ENCODE measurements at regions of chr4 and their contacts with region 1.

Region 1: DNA sequence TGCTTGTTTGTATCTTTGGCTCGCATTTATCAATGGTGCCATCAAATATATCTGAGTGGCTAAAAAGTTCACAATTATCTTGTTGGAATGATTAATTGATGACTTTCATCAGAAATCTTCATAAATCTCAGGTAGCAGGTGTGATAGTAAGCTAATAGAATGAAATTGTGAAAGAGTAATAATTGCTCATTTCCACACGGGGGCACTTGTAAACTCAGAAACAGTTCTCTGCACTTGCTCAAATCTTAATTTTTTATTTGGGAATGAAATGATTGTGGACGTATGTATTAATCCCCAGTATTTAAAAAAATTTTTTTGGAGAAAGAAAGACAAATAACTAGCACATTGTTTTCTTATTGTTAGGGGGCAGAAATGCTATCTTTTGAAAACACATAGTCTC is 132.8 kb downstream of the DTHD1 start:
- DNase-seq: no peak
- H3K4me3 ChIP-seq: no peak overlapping the region
- H3K4me3 Mint-ChIP-seq: no peak overlapping the region
- H3K27ac ChIP-seq: no peak overlapping the region
- H3K27ac Mint-ChIP-seq: no peak overlapping the region
- H3K4me1 ChIP-seq: no peaks in the 10 kb centered on the region
- H3K4me1 Mint-ChIP-seq: no peaks in the 10 kb centered on the region
- H3K27me3 ChIP-seq: peaks cover 14% of the 10 kb centered on the region
- H3K27me3 Mint-ChIP-seq: peaks cover 21 to 37% of the 10 kb centered on the region in 2 donors

Region 2: DNA sequence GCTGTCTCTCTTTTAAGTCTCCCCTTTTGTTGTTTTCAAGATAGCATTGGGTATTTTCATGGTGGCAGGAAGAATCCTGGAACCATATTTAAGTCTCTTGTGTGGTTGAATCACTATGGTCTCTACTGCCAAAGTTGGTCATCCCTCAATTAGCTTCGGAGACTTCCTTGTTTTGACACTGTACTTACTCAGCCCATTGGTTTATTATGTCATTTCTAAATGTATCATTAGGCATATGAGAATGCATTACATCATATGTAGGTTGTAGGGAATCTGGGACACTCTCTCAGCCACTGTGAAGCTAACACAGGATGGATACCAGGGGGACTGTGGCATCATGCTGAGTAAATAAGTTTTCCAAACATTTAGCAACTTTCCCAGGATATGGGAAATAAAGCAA is 79.0 kb after region 1 on chr4:
- CTCF ChIA-PET with region 1: no interaction called
- POLR2A ChIA-PET with region 1: no interaction called
- intact Hi-C with region 1: no loop called
- DNase-seq: no peak
- H3K4me3 ChIP-seq: no peak overlapping the region
- H3K4me3 Mint-ChIP-seq: no peak overlapping the region
- H3K27ac ChIP-seq: no peak overlapping the region
- H3K27ac Mint-ChIP-seq: no peak overlapping the region
- H3K4me1 ChIP-seq: no peaks in the 10 kb centered on the region
- H3K4me1 Mint-ChIP-seq: no peaks in the 10 kb centered on the region
- H3K27me3 ChIP-seq: no peaks in the 10 kb centered on the region
- H3K27me3 Mint-ChIP-seq: peaks cover 0 to 1% of the 10 kb centered on the region in 2 donors

Region 3: DNA sequence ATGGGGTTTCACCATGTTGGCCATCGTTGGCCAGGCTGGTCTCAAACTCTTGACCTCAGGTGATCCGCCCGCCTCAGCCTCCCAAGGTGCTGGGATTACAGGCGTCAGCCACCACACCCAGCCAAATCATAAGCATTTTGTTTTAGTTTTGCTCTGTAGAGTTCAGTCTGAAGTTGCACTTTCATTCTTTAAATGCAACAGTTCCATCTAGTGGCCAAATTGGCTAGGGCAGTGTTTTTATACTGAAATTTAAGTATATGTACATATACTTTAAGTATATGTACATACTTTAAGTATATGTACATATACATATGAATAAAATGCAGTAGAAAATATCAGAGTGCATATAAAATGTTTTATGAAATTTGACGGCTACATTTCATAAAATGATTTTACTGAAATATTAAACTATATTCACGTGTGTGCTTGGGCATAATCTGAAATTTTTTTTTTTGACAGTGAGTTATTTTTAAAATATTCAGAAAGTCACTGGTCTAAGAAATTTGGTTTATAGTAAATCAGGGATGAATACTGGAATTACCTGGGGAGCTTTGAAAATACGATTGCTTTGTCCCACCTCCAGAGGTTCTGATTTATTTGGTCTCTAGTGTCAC is 975.8 kb after region 1 on chr4:
- CTCF ChIA-PET with region 1: no interaction called
- POLR2A ChIA-PET with region 1: no interaction called
- intact Hi-C with region 1: loop called (anchors 5 kb)
- DNase-seq: peak in 3 of 5 donors; percentile 2 to 23 (median 8)
- H3K4me3 ChIP-seq: no peak overlapping the region
- H3K4me3 Mint-ChIP-seq: peak overlapping the region in 1 of 8 donors; percentile 7
- H3K27ac ChIP-seq: no peak overlapping the region
- H3K27ac Mint-ChIP-seq: no peak overlapping the region
- H3K4me1 ChIP-seq: no peaks in the 10 kb centered on the region
- H3K4me1 Mint-ChIP-seq: no peaks in the 10 kb centered on the region
- H3K27me3 ChIP-seq: no peaks in the 10 kb centered on the region
- H3K27me3 Mint-ChIP-seq: peaks cover 6% of the 10 kb centered on the region in 2 donors